ENCODE measurements at regions of chr11 and their contacts with region 1.

Region 1: DNA sequence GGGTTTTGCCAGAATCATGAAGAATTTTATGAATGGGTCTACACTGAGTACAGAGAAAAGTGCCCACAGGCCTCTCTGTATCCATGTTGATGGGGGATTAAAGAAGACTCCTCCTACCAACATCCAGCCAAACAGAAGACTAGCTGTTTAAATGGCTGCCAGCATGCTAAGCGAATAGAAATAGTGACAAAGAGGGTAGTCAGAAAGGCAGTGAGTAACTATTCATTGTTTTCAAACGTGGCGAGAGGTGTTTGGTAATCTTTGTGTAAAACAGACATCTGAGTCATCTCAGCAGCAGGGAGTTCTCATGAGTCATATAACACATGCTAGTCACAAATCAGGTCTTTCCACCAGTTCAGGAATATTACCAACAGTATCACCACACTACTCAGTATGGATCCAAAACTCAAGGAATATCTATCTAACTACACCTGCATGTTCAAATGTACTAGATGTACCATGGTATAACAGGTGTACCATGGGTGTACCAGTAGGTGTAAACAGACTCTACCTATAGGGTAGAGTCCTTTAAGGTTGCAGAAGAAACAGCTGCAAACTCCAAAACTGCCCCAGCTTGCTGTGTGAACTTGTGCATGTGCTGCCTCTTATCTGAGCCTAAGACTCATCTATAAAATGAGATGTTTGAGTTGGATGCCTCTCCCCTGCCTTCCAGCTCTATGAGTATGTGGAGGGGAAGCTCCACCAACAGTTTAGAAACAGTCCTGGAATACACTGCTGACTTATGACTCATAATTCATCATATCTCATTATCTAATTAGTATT is 82.0 kb downstream of the SLC1A2 start:
- DNase-seq: no peak
- ATAC-seq: peak; percentile 31
- H3K4me3 ChIP-seq: no peak overlapping the region
- H3K27ac ChIP-seq: no peak overlapping the region
- H3K4me1 ChIP-seq: peaks cover 8% of the 10 kb centered on the region; the same call in 1 of the 2 replicates
- H3K27me3 ChIP-seq: no peaks in the 10 kb centered on the region
- CTCF ChIP-seq: no peak
- EP300 ChIP-seq: no peak
- POLR2A ChIP-seq: no peak
- RAD21 ChIP-seq: no peak

Region 2: DNA sequence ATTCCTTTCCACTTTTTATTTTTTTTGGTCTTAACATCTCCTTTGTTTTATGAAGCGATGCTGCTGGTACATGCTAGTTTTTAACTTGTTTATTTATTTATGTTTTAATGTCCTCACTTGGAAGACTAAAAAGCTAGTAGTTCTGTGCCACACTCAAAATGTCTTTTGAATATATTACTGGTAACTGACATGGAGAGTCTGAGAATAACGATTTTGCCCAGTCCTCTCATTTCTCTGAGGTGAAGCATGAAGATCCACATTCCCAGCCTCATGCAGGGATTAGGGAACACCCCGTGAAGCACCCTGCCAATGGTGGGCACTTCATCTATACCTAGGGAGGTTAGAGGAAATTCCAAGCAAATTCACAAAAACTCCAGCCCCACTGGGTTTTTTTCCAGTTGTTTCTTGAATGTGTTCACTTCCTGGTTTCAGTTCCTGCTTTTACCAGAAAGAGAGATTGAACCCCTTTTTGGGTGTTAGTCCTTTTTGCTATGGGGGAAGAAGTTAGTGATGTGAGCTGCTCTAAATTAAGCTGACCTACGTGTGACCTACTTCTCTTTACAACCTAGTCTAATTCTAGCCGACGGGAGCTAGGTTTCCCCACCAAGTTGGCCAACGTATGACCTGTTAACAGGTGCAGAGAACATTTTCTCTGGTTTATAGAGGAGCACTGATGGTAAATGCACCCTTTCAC is 24.1 kb before region 1 on chr11:
- CTCF ChIA-PET with region 1: interaction called, 4 read pairs
- POLR2A ChIA-PET with region 1: interaction called, 7 read pairs
- RAD21 ChIA-PET with region 1: interaction called, 36 read pairs
- SMC1A ChIA-PET with region 1: interaction called, 24 read pairs
- in situ Hi-C with region 1: no loop called
- intact Hi-C with region 1: no loop called
- DNase-seq: peak; percentile 71
- ATAC-seq: peak; percentile 95
- H3K4me3 ChIP-seq: 0 out of 2 replicates have a peak overlapping the region, but pooled peaks have one; percentile 24
- H3K27ac ChIP-seq: peak overlapping the region; percentile 76
- H3K4me1 ChIP-seq: peaks cover 30% of the 10 kb centered on the region
- H3K27me3 ChIP-seq: no peaks in the 10 kb centered on the region
- CTCF ChIP-seq: no peak
- EP300 ChIP-seq: peak; percentile 85; a peak in 3 of 4 replicates
- POLR2A ChIP-seq: no peak
- RAD21 ChIP-seq: 0 out of 2 replicates have a peak, but pooled peaks have one; percentile 2

Region 3: DNA sequence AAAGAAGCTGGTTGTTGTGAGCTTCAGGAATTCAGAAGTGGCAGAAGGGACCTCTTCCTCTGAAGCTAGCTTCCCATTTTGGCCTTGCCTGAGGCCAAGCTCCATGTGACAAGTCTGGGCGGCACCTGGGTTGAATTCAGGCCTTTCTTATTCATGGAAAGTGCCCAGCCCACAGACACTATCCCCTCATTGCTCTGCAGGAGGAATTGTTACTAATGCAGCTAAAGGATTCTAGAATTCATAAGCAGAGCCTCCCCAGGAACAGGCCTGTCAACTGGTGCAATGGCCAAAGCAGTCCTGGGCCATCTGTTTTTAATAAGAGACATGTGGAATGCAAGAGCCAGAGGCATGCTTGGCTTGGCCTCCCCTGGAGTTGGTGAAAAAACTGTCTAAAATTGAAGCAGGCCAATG is 10.6 kb after region 1 on chr11:
- CTCF ChIA-PET with region 1: interaction called, 6 read pairs
- POLR2A ChIA-PET with region 1: interaction called, 5 read pairs
- RAD21 ChIA-PET with region 1: interaction called, 4 read pairs
- SMC1A ChIA-PET with region 1: interaction called, 26 read pairs
- in situ Hi-C with region 1: no loop called
- intact Hi-C with region 1: no loop called
- DNase-seq: no peak
- ATAC-seq: no peak
- H3K4me3 ChIP-seq: no peak overlapping the region
- H3K27ac ChIP-seq: no peak overlapping the region
- H3K4me1 ChIP-seq: peaks cover 24% of the 10 kb centered on the region
- H3K27me3 ChIP-seq: no peaks in the 10 kb centered on the region
- CTCF ChIP-seq: no peak
- EP300 ChIP-seq: no peak
- POLR2A ChIP-seq: no peak
- RAD21 ChIP-seq: no peak

Region 4: DNA sequence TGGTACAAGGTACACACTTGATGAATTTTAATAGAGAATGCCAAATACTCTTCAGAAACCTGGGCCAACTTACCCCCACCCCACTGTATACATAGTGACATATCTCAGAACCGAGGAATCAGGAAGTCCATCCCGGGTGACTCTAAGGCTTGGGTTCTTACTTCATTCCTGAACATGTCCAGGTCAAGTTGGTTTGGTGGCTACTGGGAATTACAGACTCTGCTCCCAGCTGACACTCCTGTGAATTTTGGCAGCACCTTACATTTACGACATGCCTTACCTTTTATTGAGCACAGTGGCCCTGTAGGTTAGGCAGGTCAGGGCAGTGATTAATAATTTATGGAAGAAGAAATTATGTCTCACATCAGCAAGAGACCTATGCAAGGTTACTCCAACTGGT is 536.4 kb after region 1 on chr11:
- CTCF ChIA-PET with region 1: no interaction called
- POLR2A ChIA-PET with region 1: no interaction called
- RAD21 ChIA-PET with region 1: no interaction called
- SMC1A ChIA-PET with region 1: no interaction called
- in situ Hi-C with region 1: no loop called
- intact Hi-C with region 1: no loop called
- DNase-seq: no peak
- ATAC-seq: no peak
- H3K4me3 ChIP-seq: no peak overlapping the region
- H3K27ac ChIP-seq: no peak overlapping the region
- H3K4me1 ChIP-seq: no peaks in the 10 kb centered on the region
- H3K27me3 ChIP-seq: no peaks in the 10 kb centered on the region
- CTCF ChIP-seq: no peak
- EP300 ChIP-seq: no peak
- POLR2A ChIP-seq: no peak
- RAD21 ChIP-seq: no peak